ENCODE measurements at regions of chr17 and their contacts with region 1.

Region 1: GRCh38 chr17:76726231-76726775 is at the start of gene JMJD6:
- DNase-seq: peak; percentile 99
- H3K4me3 ChIP-seq: peak within 1 kb of the TSS; percentile 79 to 95 (median 86)
- H3K27ac ChIP-seq: peak within 1 kb of the TSS; percentile 98 to 100 (median 100)
- H3K4me1 ChIP-seq: peaks cover 0 to 73% (median 58%) of the 10 kb centered on the region in 4 donors
- H3K27me3 ChIP-seq: no peaks in the 10 kb centered on the region
- CTCF ChIP-seq: no peak
- EP300 ChIP-seq: peak in 2 of 4 donors; percentile 29 to 54
- POLR2A ChIP-seq: peak; percentile 95 to 97
- total RNA-seq, gene JMJD6: 21.3 to 37.3 (median 28.9) TPM

Region 2: GRCh38 chr17:76687308-76688164 is 38.8 kb before region 1 on chr17:
- intact Hi-C with region 1: loop called (anchors 5 kb)
- DNase-seq: peak; percentile 90
- H3K4me3 ChIP-seq: peak overlapping the region in 2 of 4 donors; percentile 12
- H3K27ac ChIP-seq: peak overlapping the region; percentile 90 to 98 (median 93)
- H3K4me1 ChIP-seq: peaks cover 2 to 100% (median 97%) of the 10 kb centered on the region in 4 donors
- H3K27me3 ChIP-seq: no peaks in the 10 kb centered on the region
- CTCF ChIP-seq: no peak
- EP300 ChIP-seq: peak in 1 of 4 donors; percentile 80
- POLR2A ChIP-seq: peak in 1 of 2 donors; percentile 23

Region 3: DNA sequence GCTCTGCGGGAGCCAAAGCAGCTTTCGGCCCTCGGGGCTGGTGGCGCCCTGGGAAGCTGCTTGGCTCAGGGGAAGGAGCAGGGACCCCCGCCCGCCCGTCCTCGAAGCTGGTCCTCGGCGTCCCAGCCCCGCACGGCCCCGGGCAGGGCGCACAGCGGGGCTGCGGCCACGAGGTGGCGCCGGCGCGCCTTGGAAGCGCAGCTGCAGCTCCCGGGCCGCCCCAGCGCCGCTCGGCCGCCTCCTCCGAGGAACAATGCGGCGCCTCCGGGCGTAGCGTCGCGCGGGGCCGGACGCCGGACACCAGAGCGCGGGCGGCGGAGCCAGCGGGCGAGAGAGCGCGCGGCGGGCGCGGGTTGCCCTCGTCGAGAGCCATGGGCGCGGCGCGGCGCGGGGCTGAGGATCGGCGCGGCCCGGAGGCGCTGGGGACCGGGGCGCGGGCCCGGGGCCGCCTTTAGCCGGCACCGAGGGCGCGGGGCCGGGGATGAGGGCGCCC is 141.9 kb after region 1 on chr17 and contains the start of gene MGAT5B:
- intact Hi-C with region 1: no loop called
- DNase-seq: peak; percentile 83
- H3K4me3 ChIP-seq: peak within 1 kb of the TSS in 3 of 4 donors; percentile 34 to 44 (median 43)
- H3K27ac ChIP-seq: no peak within 1 kb of the TSS
- H3K4me1 ChIP-seq: peaks cover 0 to 26% (median 22%) of the 10 kb centered on the region in 4 donors
- H3K27me3 ChIP-seq: peaks cover 25 to 79% (median 54%) of the 10 kb centered on the region in 3 donors
- CTCF ChIP-seq: peak; percentile 14 to 85 (median 28)
- EP300 ChIP-seq: no peak
- POLR2A ChIP-seq: no peak
- total RNA-seq, gene MGAT5B: 0.16 to 0.83 (median 0.49) TPM